Endothelial cell of umbilical vein (primary cell): ENCODE measurements at regions of chr2 and their contacts with region 1.

Region 1: GRCh38 chr2:176638167-176639015 is 369.1 kb downstream of the MTX2 start:
- DNase-seq: peak; percentile 74
- H3K4me3 ChIP-seq: peak overlapping the region; percentile 9 to 59 (median 55)
- H3K27ac ChIP-seq: peak overlapping the region; percentile 79
- H3K4me1 ChIP-seq: peaks cover 25% of the 10 kb centered on the region
- H3K27me3 ChIP-seq: no peaks in the 10 kb centered on the region
- CTCF ChIP-seq: peak; percentile 63 to 83
- POLR2A ChIP-seq: no peak

Region 2: GRCh38 chr2:176565641-176566323 is 72.6 kb before region 1 on chr2:
- CTCF ChIA-PET with region 1: interaction called, 17 read pairs
- POLR2A ChIA-PET with region 1: no interaction called
- dilution Hi-C with region 1: no loop called
- intact Hi-C with region 1: loop called (anchors 1 kb)
- DNase-seq: peak; percentile 98
- H3K4me3 ChIP-seq: peak overlapping the region in 1 of 3 experiments; percentile 2
- H3K27ac ChIP-seq: peak overlapping the region; percentile 67
- H3K4me1 ChIP-seq: peaks cover 15% of the 10 kb centered on the region
- H3K27me3 ChIP-seq: no peaks in the 10 kb centered on the region
- CTCF ChIP-seq: no peak
- POLR2A ChIP-seq: no peak